A549 (cell line): ENCODE measurements at regions of chr14 and their contacts with region 1.

Region 1: DNA sequence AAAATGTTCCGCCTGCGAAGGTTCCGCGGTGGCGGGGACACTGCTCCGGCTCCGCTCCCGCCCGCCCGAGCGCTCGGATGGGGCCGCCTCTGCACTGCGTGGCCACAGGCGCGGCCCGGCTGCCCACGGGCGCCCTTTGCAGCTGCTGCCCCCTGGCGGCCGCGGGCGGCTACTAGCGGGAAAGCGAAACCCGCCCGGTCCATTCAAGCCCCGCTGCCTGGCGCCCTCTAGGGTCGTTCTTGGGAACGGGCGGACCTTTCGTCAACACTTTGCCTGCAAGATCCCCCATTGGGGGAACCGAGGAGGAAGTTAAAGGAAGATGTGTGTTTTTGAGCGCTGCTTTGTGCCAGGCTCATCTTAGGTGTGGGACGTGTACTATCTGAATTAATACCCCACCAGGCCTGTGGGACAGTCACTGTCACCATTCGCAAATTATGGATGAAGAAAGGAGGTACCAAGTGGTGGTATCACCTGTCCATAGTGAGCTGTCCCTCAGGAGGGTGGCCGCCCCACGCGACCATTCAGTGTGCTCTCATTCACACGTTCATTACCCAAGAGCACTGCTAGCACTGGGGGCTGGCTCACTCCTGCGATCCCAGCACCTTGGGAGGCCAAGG is 19.4 kb downstream of the GPR132 start:
- DNase-seq: peak; percentile 87 to 91
- ATAC-seq: peak; percentile 82 to 92
- H3K4me3 ChIP-seq: peak overlapping the region; percentile 26; the same call in 1 of the 3 replicates
- H3K27ac ChIP-seq: peak overlapping the region; percentile 57 to 61; a peak in 5 of 6 replicates
- H3K4me1 ChIP-seq: 0 out of 3 replicates have a peak, but pooled peaks cover 7% of the 10 kb centered on the region
- CTCF ChIP-seq: peak; percentile 100
- EP300 ChIP-seq: no peak
- POLR2A ChIP-seq: no peak
- RAD21 ChIP-seq: peak; percentile 97 to 100

Region 2: GRCh38 chr14:104932676-104933631 is 112.9 kb before region 1 on chr14:
- CTCF ChIA-PET with region 1: interaction called, 50 read pairs
- POLR2A ChIA-PET with region 1: no interaction called
- DNase-seq: peak; percentile 79 to 89
- ATAC-seq: peak; percentile 57 to 80
- H3K4me3 ChIP-seq: peak overlapping the region; percentile 48
- H3K27ac ChIP-seq: peak overlapping the region; percentile 79 to 92
- H3K4me1 ChIP-seq: peaks cover 7% of the 10 kb centered on the region; the same call in 1 of the 3 replicates
- CTCF ChIP-seq: peak; percentile 71
- EP300 ChIP-seq: no peak
- POLR2A ChIP-seq: no peak
- RAD21 ChIP-seq: peak; percentile 43 to 76; a peak in 4 of 5 replicates

Region 3: GRCh38 chr14:104985675-104986525 is 59.9 kb before region 1 on chr14 and contains the start of gene CLBA1:
- CTCF ChIA-PET with region 1: interaction called, 74 read pairs
- POLR2A ChIA-PET with region 1: no interaction called
- DNase-seq: peak; percentile 90 to 93
- ATAC-seq: peak; percentile 89 to 91
- H3K4me3 ChIP-seq: peak within 1 kb of the TSS; percentile 87
- H3K27ac ChIP-seq: peak within 1 kb of the TSS; percentile 89 to 96
- H3K4me1 ChIP-seq: peaks cover 16% of the 10 kb centered on the region; the same call in 2 of the 3 replicates
- CTCF ChIP-seq: no peak
- EP300 ChIP-seq: no peak
- POLR2A ChIP-seq: peak; percentile 55
- RAD21 ChIP-seq: no peak
- polyA plus RNA-seq, gene CLBA1: 11.3 and 11.5 TPM in 2 replicates

Region 4: GRCh38 chr14:105020815-105021655 is 24.8 kb before region 1 on chr14 and contains the start of gene CDCA4:
- CTCF ChIA-PET with region 1: interaction called, 509 read pairs
- POLR2A ChIA-PET with region 1: interaction called, 7 read pairs
- DNase-seq: peak; percentile 96 to 97
- ATAC-seq: peak; percentile 81 to 84
- H3K4me3 ChIP-seq: peak within 1 kb of the TSS; percentile 97
- H3K27ac ChIP-seq: peak within 1 kb of the TSS; percentile 97 to 98
- H3K4me1 ChIP-seq: peaks cover 75% of the 10 kb centered on the region
- CTCF ChIP-seq: no peak
- EP300 ChIP-seq: no peak
- POLR2A ChIP-seq: peak; percentile 71
- RAD21 ChIP-seq: no peak
- polyA plus RNA-seq, gene CDCA4: 19.5 and 24.2 TPM in 2 replicates

Region 5: DNA sequence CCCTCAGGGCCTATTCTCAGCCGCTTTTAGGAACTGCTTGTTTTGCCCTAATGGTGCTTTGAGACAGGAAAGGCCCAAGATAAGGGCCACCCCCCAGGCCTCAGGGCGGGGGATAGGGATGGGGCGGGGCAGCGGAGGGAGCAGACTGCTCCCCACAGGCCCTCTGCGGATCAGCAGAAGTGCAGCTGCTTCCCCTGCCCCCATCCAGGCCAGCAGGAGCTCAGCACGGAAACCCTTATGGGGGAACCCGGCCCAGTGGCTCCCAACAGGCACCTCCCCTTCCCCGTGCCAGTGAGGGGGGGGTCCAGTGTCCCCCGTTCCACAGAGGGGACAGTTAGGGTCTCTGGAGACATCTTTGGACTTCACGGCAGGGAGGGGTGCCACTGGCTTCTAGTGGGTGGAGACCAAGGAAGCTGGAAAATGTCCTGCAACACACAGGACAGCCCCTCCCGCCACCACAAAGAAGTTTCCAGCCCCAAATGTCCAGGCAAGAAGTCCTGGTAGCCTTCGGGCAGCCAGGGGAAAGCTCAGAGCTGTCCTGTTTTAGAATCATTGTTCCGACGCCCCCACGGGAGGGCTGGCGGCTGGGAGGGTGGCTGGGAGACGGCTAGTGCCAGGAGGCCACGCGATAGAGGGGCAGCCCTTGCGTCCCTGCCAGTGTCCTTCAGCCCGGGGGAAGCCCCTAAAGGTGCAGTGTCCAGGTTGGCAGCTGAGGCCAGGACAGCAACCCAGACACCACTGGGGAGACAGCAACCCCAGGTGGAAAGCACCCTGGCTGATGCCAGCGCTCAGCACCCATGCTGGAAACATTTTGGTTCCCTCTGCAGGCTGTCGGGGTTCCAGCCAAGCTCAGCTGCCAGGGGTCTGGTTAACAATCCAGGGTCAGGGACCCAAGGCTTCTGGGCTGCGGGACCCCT is 29.8 kb after region 1 on chr14:
- CTCF ChIA-PET with region 1: interaction called, 11 read pairs
- POLR2A ChIA-PET with region 1: no interaction called
- DNase-seq: no peak
- ATAC-seq: peak; percentile 5; a peak in 2 of 6 replicates
- H3K4me3 ChIP-seq: no peak overlapping the region
- H3K27ac ChIP-seq: peak overlapping the region in 1 of 2 experiments; percentile 50; a peak in 3 of 6 replicates
- H3K4me1 ChIP-seq: peaks cover 6% of the 10 kb centered on the region; the same call in 1 of the 3 replicates
- CTCF ChIP-seq: no peak
- EP300 ChIP-seq: no peak
- POLR2A ChIP-seq: no peak
- RAD21 ChIP-seq: no peak